ENCODE measurements at regions of chr7 and their contacts with region 1.

Region 1: DNA sequence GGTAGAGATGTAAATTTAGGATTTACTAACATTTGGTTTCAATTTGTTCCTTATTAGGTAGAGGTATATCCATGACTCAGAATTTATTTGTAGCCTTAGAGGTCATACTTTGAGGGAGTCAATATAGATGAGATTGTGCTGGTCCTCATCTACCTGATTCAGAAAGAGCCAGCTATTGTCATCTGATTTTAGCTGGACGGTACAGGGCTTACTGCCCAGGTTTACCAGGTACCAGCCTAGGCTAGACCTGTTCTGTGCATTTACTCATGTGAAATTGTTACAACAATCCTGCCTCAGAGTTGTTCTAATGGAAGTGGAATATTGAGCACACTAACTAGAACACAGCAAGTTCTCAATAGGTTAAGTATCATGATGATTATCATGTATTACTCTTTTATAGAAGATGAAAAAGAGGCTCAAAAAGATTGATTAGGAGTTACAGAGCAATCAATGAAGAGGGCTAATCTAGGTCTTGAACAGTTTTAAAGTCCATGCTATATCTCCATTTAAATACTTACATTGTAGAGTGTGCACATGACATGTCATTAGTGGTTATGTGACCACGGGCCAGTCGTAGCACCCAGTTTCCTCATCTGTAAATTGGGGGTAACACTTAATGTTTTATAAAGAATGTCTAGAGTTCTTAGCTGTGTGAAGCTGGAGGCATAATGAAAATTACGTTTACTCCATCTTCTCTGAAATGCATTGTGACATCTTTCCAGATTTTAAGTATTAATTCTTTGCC is 42.1 kb downstream of the TRIM24 start:
- DNase-seq: no peak
- H3K4me3 Mint-ChIP-seq: no peak overlapping the region
- H3K27ac Mint-ChIP-seq: no peak overlapping the region
- H3K4me1 Mint-ChIP-seq: peaks cover 20% of the 10 kb centered on the region
- H3K27me3 Mint-ChIP-seq: no peaks in the 10 kb centered on the region

Region 2: DNA sequence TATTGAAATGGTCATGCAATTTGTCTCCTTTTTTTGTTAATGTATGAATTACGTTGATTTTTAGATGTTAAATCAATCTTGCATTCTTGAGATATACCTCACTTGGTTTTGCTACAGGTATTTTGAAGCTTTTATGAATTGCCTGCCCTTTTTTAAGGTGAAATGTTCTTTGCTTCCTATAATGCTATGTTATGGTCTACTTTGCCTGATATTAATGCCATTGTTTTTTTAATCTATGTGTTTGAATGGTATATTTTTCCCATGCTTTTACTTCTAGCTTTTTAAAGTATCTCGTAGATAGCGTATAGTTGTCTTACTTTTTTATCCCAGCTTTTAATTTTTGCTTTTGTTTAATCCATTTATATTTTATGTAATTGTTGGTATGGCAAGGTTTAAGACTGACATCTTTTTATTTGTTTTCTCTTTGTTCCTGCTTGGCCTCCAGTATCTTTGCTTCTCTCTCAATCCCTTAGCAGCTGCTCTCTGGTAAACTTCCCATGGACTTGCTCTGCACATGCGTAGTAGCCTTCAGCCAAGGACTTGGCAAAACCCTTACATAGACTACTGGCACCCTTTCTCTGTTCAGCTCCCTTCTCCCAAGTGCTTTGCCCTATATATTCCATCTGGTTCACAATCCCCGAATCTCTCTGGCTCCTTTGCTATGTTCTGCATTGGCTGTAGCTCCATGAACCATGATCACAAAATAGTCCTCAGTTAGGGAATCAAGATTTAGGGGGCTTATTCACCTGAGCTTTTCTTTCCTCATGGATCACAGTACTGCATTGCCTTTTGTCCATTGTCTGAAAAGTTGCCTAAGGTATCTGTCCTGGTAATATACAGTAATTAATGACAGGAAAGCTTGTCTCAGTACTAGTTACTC is 33.7 kb before region 1 on chr7:
- CTCF ChIA-PET with region 1: no interaction called
- POLR2A ChIA-PET with region 1: no interaction called
- intact Hi-C with region 1: loop called (anchors 5 kb)
- DNase-seq: no peak
- H3K4me3 Mint-ChIP-seq: no peak overlapping the region
- H3K27ac Mint-ChIP-seq: no peak overlapping the region
- H3K4me1 Mint-ChIP-seq: peaks cover 36% of the 10 kb centered on the region
- H3K27me3 Mint-ChIP-seq: no peaks in the 10 kb centered on the region

Region 3: GRCh38 chr7:138481447-138482380 is 20.5 kb before region 1 on chr7:
- CTCF ChIA-PET with region 1: no interaction called
- POLR2A ChIA-PET with region 1: no interaction called
- intact Hi-C with region 1: loop called (anchors 2 kb)
- DNase-seq: no peak
- H3K4me3 Mint-ChIP-seq: peak overlapping the region; percentile 48
- H3K27ac Mint-ChIP-seq: no peak overlapping the region
- H3K4me1 Mint-ChIP-seq: peaks cover 45% of the 10 kb centered on the region
- H3K27me3 Mint-ChIP-seq: no peaks in the 10 kb centered on the region